MCF 10A (cell line): ENCODE measurements at regions of chr3 and their contacts with region 1.

Region 1: DNA sequence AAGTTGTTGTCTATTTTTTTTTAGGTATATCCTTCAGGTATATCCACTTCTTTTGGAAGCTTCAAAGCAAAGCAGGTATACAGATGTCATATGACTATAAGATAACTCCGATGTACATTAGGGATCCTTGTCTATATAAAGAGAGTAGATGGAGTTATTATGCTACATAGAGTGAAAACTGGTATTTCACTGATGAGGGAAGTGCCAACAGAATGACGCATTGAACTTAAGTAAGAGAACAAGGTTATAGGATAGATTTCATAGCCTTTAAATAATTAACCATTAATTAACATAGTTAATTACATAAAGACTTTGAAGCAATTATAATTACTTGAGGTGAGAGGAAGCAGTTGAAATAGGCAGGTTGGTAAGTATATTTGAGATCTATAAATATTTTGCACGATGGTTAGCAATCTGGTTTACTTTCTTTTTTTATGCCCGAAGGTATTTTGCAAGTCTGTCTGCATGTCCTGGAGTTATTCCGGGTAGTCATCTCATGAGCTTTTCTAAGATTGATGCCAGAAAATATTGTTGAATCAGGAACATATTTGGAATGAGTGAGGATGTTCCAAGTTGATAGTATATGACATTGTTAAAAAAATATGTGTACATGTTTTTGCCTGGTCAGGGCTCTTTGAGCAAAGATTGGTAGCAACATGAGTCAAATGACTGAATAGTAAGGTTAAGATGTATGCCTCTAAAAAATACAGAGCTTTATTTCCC is 299.5 kb upstream of the KCNMB2 start:
- DNase-seq: peak; percentile 65
- H3K4me3 Mint-ChIP-seq: peak overlapping the region; percentile 70
- H3K27ac Mint-ChIP-seq: peak overlapping the region; percentile 83
- H3K4me1 Mint-ChIP-seq: peaks cover 24% of the 10 kb centered on the region
- H3K27me3 Mint-ChIP-seq: no peaks in the 10 kb centered on the region
- CTCF ChIP-seq: no peak

Region 2: GRCh38 chr3:178195824-178196223 is 40.9 kb before region 1 on chr3:
- CTCF ChIA-PET with region 1: interaction called, 4 read pairs
- POLR2A ChIA-PET with region 1: interaction called, 12 read pairs
- intact Hi-C with region 1: no loop called
- DNase-seq: peak; percentile 50
- H3K4me3 Mint-ChIP-seq: no peak overlapping the region
- H3K27ac Mint-ChIP-seq: peak overlapping the region; percentile 5
- H3K4me1 Mint-ChIP-seq: peaks cover 26% of the 10 kb centered on the region
- H3K27me3 Mint-ChIP-seq: no peaks in the 10 kb centered on the region
- CTCF ChIP-seq: no peak

Region 3: GRCh38 chr3:178275793-178276192 is 39.1 kb after region 1 on chr3:
- CTCF ChIA-PET with region 1: interaction called, 4 read pairs
- POLR2A ChIA-PET with region 1: interaction called, 61 read pairs
- intact Hi-C with region 1: no loop called
- DNase-seq: no peak
- H3K4me3 Mint-ChIP-seq: no peak overlapping the region
- H3K27ac Mint-ChIP-seq: peak overlapping the region; percentile 71
- H3K4me1 Mint-ChIP-seq: peaks cover 22% of the 10 kb centered on the region
- H3K27me3 Mint-ChIP-seq: no peaks in the 10 kb centered on the region
- CTCF ChIP-seq: no peak